H1 (cell line): ENCODE measurements at regions of chrX and their contacts with region 1.

Region 1: GRCh38 chrX:17812763-17813162 is 48.3 kb downstream of the RAI2 start:
- DNase-seq: no peak
- H3K4me3 ChIP-seq: no peak overlapping the region
- H3K27ac ChIP-seq: no peak overlapping the region
- H3K4me1 ChIP-seq: no peaks in the 10 kb centered on the region; a peak in 1 of 7 replicates
- H3K27me3 ChIP-seq: no peaks in the 10 kb centered on the region
- CTCF ChIP-seq: peak; percentile 30 to 73 (median 57)
- EP300 ChIP-seq: no peak
- POLR2A ChIP-seq: no peak
- RAD21 ChIP-seq: peak; percentile 79 to 83

Region 2: GRCh38 chrX:17564689-17565409 is 247.9 kb before region 1 on chrX:
- CTCF ChIA-PET with region 1: no interaction called
- POLR2A ChIA-PET with region 1: no interaction called
- DNase-seq: no peak
- H3K4me3 ChIP-seq: no peak overlapping the region
- H3K27ac ChIP-seq: no peak overlapping the region
- H3K4me1 ChIP-seq: peaks cover 0 to 2% (median 0%) of the 10 kb centered on the region in 4 experiments; a peak in 2 of 7 replicates
- H3K27me3 ChIP-seq: no peaks in the 10 kb centered on the region
- CTCF ChIP-seq: no peak
- EP300 ChIP-seq: no peak
- POLR2A ChIP-seq: no peak
- RAD21 ChIP-seq: no peak

Region 3: DNA sequence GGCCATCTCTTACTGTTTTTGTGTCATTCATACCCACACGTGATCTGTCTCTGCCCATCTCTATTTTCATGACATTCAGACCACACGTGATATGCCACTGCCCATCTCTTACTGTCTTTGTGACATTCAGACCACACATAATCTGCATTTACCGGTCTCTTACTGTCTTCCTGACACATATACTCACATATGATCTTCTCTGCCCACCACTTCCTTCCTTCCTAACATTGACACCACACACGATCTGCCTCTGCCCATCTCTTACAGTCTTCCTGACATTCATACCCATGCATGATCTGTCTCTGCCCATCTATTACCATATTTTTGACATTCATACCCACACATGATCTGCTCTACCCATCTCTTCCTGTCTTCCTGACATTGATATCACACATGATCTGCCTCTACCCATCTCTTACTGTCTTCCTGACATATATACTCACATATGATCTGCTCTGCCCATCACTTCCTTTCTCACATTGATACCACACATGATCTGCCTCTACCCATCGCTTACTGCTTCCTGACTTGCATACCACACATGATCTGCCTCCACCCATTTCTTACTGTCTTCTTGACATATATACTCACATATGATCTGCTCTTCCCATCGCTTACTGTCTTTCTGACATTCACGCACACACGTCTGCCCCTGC is 39.4 kb before region 1 on chrX:
- CTCF ChIA-PET with region 1: no interaction called
- POLR2A ChIA-PET with region 1: no interaction called
- DNase-seq: no peak
- H3K4me3 ChIP-seq: no peak overlapping the region
- H3K27ac ChIP-seq: no peak overlapping the region
- H3K4me1 ChIP-seq: no peaks in the 10 kb centered on the region
- H3K27me3 ChIP-seq: no peaks in the 10 kb centered on the region; a peak in 1 of 7 replicates
- CTCF ChIP-seq: no peak
- EP300 ChIP-seq: no peak
- POLR2A ChIP-seq: no peak
- RAD21 ChIP-seq: no peak

Region 4: GRCh38 chrX:17788439-17788838 is 24.3 kb before region 1 on chrX:
- CTCF ChIA-PET with region 1: interaction called, 11 read pairs
- POLR2A ChIA-PET with region 1: no interaction called
- DNase-seq: peak; percentile 19 to 55
- H3K4me3 ChIP-seq: no peak overlapping the region
- H3K27ac ChIP-seq: no peak overlapping the region
- H3K4me1 ChIP-seq: peaks cover 0 to 3% (median 0%) of the 10 kb centered on the region in 4 experiments; a peak in 1 of 7 replicates
- H3K27me3 ChIP-seq: no peaks in the 10 kb centered on the region
- CTCF ChIP-seq: peak; percentile 64 to 76 (median 70)
- EP300 ChIP-seq: no peak
- POLR2A ChIP-seq: no peak
- RAD21 ChIP-seq: peak; percentile 72 to 76

Region 5: GRCh38 chrX:17802756-17803155 is 10.0 kb before region 1 on chrX:
- CTCF ChIA-PET with region 1: interaction called, 20 read pairs
- POLR2A ChIA-PET with region 1: no interaction called
- DNase-seq: no peak
- H3K4me3 ChIP-seq: no peak overlapping the region
- H3K27ac ChIP-seq: no peak overlapping the region
- H3K4me1 ChIP-seq: 0 out of 7 replicates have a peak, but pooled peaks cover 0 to under 1% (median 0%) of the 10 kb centered on the region in 4 experiments
- H3K27me3 ChIP-seq: no peaks in the 10 kb centered on the region
- CTCF ChIP-seq: no peak
- EP300 ChIP-seq: no peak
- POLR2A ChIP-seq: no peak
- RAD21 ChIP-seq: no peak

Region 6: GRCh38 chrX:17829566-17829965 is 16.8 kb after region 1 on chrX:
- CTCF ChIA-PET with region 1: interaction called, 10 read pairs
- POLR2A ChIA-PET with region 1: no interaction called
- DNase-seq: no peak
- H3K4me3 ChIP-seq: no peak overlapping the region
- H3K27ac ChIP-seq: no peak overlapping the region
- H3K4me1 ChIP-seq: no peaks in the 10 kb centered on the region
- H3K27me3 ChIP-seq: no peaks in the 10 kb centered on the region
- CTCF ChIP-seq: no peak
- EP300 ChIP-seq: no peak
- POLR2A ChIP-seq: no peak
- RAD21 ChIP-seq: no peak

Region 7: DNA sequence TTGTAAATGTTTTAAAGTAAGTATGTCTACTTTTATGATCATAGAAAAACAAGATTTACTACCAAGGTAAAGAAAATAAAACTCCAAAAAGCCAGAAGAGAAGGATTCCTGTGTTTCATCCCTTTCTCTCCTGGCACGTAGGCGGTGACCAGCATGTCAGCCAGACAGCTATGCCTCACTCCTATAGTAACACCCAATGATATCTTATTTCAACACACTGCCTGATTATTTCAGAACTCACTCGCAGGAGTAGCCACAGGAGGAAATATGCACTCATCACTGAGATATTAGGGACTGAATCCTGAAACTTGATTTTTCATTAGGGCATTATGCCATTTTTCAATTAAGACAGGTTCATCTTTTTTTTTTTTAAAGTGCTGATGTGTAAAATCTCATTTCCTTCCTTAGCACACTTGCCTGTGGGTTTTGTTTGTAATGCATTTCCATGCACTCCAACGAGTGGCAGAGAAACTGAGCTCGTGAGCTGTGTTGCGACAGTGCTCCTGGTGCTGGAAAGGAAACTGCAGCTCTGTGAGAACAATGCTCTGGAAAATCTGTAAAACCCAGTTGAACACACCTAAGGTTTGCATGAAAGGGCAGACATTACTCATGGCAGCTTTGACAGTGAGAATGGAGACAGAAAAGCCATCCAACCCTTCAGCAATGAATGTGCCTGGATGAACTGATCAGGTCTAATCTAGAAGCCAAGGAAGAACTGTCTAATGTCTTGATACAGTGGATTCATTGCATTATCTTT is 30.2 kb after region 1 on chrX:
- CTCF ChIA-PET with region 1: interaction called, 12 read pairs
- POLR2A ChIA-PET with region 1: no interaction called
- DNase-seq: no peak
- H3K4me3 ChIP-seq: no peak overlapping the region
- H3K27ac ChIP-seq: no peak overlapping the region
- H3K4me1 ChIP-seq: no peaks in the 10 kb centered on the region
- H3K27me3 ChIP-seq: no peaks in the 10 kb centered on the region
- CTCF ChIP-seq: no peak
- EP300 ChIP-seq: no peak
- POLR2A ChIP-seq: no peak
- RAD21 ChIP-seq: no peak

Region 8: DNA sequence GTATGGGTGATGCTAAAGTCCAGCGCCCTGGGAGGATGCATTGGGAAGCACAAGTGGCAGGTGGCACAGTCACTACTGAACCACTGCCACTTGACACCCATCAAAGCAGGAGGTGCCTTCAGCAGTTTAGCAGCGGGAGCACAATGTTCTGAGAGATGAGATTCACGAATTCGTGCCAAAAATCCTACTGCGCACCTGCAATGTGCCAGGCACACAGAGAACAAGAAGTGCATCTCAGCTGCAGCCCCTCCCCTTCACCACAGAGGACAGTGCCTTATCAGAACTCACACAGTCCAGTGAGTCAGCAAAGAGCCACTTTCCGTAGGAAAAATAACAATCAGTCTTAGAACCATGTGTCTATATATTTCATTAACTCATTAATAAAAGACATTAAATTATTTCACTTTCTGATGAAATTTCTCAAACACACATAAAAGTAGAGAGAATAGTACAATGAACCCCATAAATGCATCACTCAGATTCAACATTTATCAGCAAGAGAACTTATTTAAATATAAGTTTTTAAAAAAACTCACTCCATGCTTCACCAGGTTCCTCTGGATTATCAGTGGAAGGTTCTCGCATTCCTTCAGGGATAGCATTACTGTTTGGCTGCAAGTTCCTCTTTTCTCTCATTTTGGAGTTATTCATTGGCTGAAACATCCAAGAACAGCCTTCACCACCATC is 360.9 kb after region 1 on chrX:
- CTCF ChIA-PET with region 1: no interaction called
- POLR2A ChIA-PET with region 1: no interaction called
- DNase-seq: no peak
- H3K4me3 ChIP-seq: no peak overlapping the region
- H3K27ac ChIP-seq: no peak overlapping the region
- H3K4me1 ChIP-seq: no peaks in the 10 kb centered on the region
- H3K27me3 ChIP-seq: no peaks in the 10 kb centered on the region
- CTCF ChIP-seq: no peak
- EP300 ChIP-seq: no peak
- POLR2A ChIP-seq: no peak
- RAD21 ChIP-seq: no peak

Region 9: GRCh38 chrX:18377796-18378195 is 565.0 kb after region 1 on chrX:
- CTCF ChIA-PET with region 1: interaction called, 10 read pairs
- POLR2A ChIA-PET with region 1: no interaction called
- DNase-seq: peak in 1 of 2 experiments; percentile 45
- H3K4me3 ChIP-seq: no peak overlapping the region
- H3K27ac ChIP-seq: no peak overlapping the region
- H3K4me1 ChIP-seq: no peaks in the 10 kb centered on the region
- H3K27me3 ChIP-seq: no peaks in the 10 kb centered on the region
- CTCF ChIP-seq: peak; percentile 22 to 68 (median 52)
- EP300 ChIP-seq: no peak
- POLR2A ChIP-seq: no peak
- RAD21 ChIP-seq: peak; percentile 73 to 79